A673 (cell line): ENCODE measurements at regions of chr18 and their contacts with region 1.

Region 1: GRCh38 chr18:38010971-38011857 is 445.6 kb upstream of the CELF4 start:
- DNase-seq: no peak
- H3K4me3 ChIP-seq: no peak overlapping the region
- H3K27ac ChIP-seq: no peak overlapping the region
- H3K4me1 ChIP-seq: no peaks in the 10 kb centered on the region
- H3K27me3 ChIP-seq: no peaks in the 10 kb centered on the region
- CTCF ChIP-seq: no peak

Region 2: GRCh38 chr18:37864122-37864521 is 147.1 kb before region 1 on chr18:
- CTCF ChIA-PET with region 1: no interaction called
- POLR2A ChIA-PET with region 1: no interaction called
- intact Hi-C with region 1: no loop called
- DNase-seq: no peak
- H3K4me3 ChIP-seq: no peak overlapping the region
- H3K27ac ChIP-seq: no peak overlapping the region
- H3K4me1 ChIP-seq: no peaks in the 10 kb centered on the region
- H3K27me3 ChIP-seq: no peaks in the 10 kb centered on the region
- CTCF ChIP-seq: no peak

Region 3: GRCh38 chr18:37937287-37937686 is 73.9 kb before region 1 on chr18:
- CTCF ChIA-PET with region 1: no interaction called
- POLR2A ChIA-PET with region 1: no interaction called
- intact Hi-C with region 1: no loop called
- DNase-seq: no peak
- H3K4me3 ChIP-seq: no peak overlapping the region
- H3K27ac ChIP-seq: no peak overlapping the region
- H3K4me1 ChIP-seq: no peaks in the 10 kb centered on the region
- H3K27me3 ChIP-seq: no peaks in the 10 kb centered on the region
- CTCF ChIP-seq: no peak

Region 4: DNA sequence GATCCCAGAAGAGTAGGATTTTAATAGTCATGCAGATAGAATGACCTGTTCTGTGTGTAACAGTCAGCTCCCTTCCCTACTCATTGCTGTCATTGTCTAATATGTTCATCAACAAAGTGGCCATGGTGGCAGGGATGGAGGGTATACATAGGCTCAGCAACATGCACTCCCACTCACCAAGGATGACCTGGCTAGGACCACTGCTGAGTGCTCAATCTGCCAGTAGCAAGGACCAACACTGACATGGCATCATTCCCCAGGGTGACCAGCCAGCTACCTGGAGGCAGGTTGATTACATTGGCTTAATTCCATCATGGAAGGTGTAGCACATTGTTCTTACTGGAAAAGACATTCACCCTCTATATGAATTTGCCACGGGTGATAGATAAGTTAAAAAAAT is 44.0 kb before region 1 on chr18:
- CTCF ChIA-PET with region 1: no interaction called
- POLR2A ChIA-PET with region 1: interaction called, 14 read pairs
- intact Hi-C with region 1: no loop called
- DNase-seq: no peak
- H3K4me3 ChIP-seq: no peak overlapping the region
- H3K27ac ChIP-seq: no peak overlapping the region
- H3K4me1 ChIP-seq: no peaks in the 10 kb centered on the region
- H3K27me3 ChIP-seq: no peaks in the 10 kb centered on the region
- CTCF ChIP-seq: no peak